OCI-LY7 (cell line): ENCODE measurements at regions of chr6 and their contacts with region 1.

Region 1: GRCh38 chr6:27492631-27493190 is 19.8 kb upstream of the ZNF184 start:
- DNase-seq: no peak
- H3K4me3 ChIP-seq: no peak overlapping the region
- H3K27ac ChIP-seq: no peak overlapping the region
- H3K4me1 ChIP-seq: no peaks in the 10 kb centered on the region
- CTCF ChIP-seq: no peak

Region 2: DNA sequence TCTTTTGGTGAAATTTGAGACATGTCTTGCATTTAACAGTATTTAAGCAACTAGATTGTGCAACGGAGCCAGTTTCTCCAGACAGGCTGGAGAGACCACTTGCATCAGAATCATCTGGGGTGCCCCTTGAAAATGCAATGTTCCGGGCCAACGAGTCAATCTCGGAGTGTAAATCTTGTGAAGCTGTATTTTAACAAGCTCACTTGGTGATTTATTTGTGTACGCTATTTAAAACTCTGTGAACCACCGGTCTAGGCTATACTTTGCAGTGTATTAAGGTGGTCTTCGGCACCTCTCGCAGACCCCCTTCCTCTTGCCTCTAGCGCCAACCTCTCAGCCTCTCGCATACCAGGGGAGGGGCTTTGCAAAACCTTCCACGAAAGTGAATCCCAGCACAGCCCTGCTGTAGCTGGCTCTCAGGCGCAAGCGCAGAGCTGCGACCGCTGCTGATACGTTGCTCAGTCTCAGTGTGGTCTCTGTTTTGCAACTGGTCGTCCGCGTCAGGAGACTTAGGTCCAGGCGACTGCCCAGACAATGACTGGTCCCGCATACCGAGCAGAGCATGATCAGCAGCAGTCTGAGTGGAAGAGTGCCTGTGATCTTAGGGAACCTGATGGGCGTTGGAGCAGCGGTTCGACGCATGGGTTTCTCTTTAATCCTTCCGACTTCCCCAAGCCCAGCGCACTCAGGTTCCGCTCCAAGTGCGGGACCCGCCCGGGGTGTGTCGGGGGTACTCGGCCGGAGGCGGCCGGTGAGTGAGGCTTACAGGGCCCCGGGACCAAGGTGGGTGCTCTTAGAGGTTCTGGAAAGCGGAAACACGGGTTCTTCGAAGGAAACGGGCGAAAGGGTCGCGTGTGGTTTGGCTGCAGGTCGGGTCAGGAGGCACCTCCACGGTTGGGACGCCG is 104.2 kb before region 1 on chr6 and contains the start of gene ZNF391:
- CTCF ChIA-PET with region 1: no interaction called
- POLR2A ChIA-PET with region 1: no interaction called
- intact Hi-C with region 1: no loop called
- DNase-seq: no peak
- H3K4me3 ChIP-seq: no peak within 1 kb of the TSS
- H3K27ac ChIP-seq: no peak within 1 kb of the TSS
- H3K4me1 ChIP-seq: no peaks in the 10 kb centered on the region
- CTCF ChIP-seq: no peak
- total RNA-seq, gene ZNF391: not detected in 2 replicates

Region 3: DNA sequence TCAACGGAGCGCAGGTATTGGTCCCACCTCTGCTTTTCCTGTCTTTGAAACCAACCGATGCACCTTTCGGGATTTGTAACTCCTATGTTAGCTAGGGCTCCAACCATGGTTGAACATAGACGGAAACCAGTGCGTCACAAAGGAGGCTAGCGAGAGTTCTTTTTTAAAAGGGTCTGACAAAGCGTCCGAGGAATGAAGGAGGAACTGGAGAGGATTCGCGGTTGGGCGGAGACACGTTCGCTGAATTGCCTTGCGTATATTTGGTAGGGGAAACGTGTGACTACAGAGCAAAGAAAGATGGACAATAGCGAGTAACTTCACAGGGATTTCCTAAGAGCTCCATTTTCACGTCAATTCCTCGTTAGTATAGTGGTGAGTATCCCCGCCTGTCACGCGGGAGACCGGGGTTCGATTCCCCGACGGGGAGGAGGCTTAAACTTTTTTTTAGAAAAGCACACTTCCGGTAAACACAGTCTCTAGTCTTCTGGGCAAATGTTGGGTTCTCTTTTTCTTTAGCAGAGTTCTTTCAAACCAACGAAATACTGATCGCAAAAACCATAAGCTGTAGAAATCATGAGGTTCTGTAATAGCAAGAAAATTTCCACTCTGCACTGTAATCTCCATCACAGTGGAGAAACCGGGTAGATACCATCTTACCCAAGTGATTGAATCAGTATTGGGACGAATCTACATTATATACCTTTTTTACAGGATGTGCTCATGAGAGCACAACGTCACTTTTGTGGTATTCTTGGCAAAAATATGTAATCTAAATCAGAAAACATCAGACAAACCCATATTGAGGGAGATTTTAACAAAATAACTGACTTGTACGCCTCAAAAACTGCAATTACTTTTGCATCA is 13.2 kb before region 1 on chr6:
- CTCF ChIA-PET with region 1: no interaction called
- POLR2A ChIA-PET with region 1: no interaction called
- intact Hi-C with region 1: no loop called
- DNase-seq: peak; percentile 85
- H3K4me3 ChIP-seq: peak overlapping the region; percentile 73
- H3K27ac ChIP-seq: peak overlapping the region; percentile 79
- H3K4me1 ChIP-seq: peaks cover 15% of the 10 kb centered on the region
- CTCF ChIP-seq: no peak

Region 4: DNA sequence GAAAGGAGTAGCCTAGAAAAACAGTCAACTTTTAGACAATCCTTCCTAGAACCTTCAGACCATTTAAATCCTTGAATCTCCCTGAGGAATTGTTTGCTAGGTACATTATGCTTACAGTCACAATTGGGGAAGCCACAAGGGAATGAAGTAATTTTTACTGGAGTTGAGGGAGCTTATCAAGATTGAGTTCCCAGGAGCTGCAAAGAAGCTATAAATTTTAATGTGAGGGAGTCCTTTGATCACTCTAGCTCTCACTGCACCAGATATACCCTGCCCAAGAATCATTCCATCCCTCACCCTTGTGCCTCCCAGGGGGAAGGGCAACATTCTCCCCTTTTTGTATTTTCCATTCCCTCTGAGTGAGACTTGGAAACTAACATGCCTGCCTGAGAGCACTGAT is 575.4 kb after region 1 on chr6:
- CTCF ChIA-PET with region 1: no interaction called
- POLR2A ChIA-PET with region 1: interaction called, 10 read pairs
- intact Hi-C with region 1: no loop called
- DNase-seq: no peak
- H3K4me3 ChIP-seq: no peak overlapping the region
- H3K27ac ChIP-seq: no peak overlapping the region
- H3K4me1 ChIP-seq: no peaks in the 10 kb centered on the region
- CTCF ChIP-seq: no peak